ENCODE measurements at regions of chr4 and their contacts with region 1.

Region 1: DNA sequence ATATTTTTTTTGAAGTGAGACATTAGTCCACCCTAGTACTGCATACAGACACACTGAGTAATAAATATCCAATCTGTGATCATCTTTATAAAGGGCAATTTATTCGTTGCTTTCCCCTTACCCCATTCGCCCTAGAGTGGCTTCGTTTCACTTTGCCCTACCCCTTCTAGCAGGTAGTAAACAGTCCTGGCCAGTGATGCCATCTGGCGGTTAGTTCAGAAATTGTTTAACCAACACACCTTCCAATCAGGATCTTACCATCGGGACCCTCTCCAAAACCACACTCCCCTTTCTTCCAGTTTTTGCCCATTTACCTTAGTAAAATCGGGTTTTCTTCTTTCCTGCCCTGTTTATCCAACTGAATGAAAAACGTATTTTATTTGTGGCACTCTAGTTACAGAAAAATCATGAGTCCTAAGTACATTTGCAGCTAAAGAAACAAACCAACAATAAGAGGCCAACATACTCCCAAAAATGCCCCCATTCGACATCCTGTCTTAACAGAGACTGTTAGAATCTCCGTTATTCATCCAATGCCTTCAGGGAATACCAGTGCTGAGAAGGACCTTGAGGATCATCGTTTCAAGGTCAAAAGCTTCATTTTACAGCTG is 2.2 kb downstream of the PPA2 start:
- DNase-seq: peak; percentile 82
- ATAC-seq: peak; percentile 32
- H3K4me3 Mint-ChIP-seq: peak overlapping the region; percentile 99
- H3K27ac Mint-ChIP-seq: peak overlapping the region; percentile 70
- H3K4me1 Mint-ChIP-seq: peaks cover 49% of the 10 kb centered on the region
- H3K27me3 Mint-ChIP-seq: peaks cover 1% of the 10 kb centered on the region
- CTCF ChIP-seq: peak; percentile 75

Region 2: GRCh38 chr4:104930298-104930697 is 541.4 kb before region 1 on chr4:
- CTCF ChIA-PET with region 1: no interaction called
- POLR2A ChIA-PET with region 1: interaction called, 3 read pairs
- intact Hi-C with region 1: loop called (anchors 10 kb)
- DNase-seq: no peak
- ATAC-seq: no peak
- H3K4me3 Mint-ChIP-seq: no peak overlapping the region
- H3K27ac Mint-ChIP-seq: no peak overlapping the region
- H3K4me1 Mint-ChIP-seq: peaks cover 40% of the 10 kb centered on the region
- H3K27me3 Mint-ChIP-seq: no peaks in the 10 kb centered on the region
- CTCF ChIP-seq: no peak

Region 3: GRCh38 chr4:105061136-105061696 is 410.5 kb before region 1 on chr4:
- CTCF ChIA-PET with region 1: interaction called, 4 read pairs
- POLR2A ChIA-PET with region 1: interaction called, 4 read pairs
- intact Hi-C with region 1: loop called (anchors 5 kb)
- DNase-seq: peak; percentile 70
- ATAC-seq: peak; percentile 60
- H3K4me3 Mint-ChIP-seq: peak overlapping the region; percentile 51
- H3K27ac Mint-ChIP-seq: peak overlapping the region; percentile 89
- H3K4me1 Mint-ChIP-seq: peaks cover 52% of the 10 kb centered on the region
- H3K27me3 Mint-ChIP-seq: no peaks in the 10 kb centered on the region
- CTCF ChIP-seq: no peak

Region 4: DNA sequence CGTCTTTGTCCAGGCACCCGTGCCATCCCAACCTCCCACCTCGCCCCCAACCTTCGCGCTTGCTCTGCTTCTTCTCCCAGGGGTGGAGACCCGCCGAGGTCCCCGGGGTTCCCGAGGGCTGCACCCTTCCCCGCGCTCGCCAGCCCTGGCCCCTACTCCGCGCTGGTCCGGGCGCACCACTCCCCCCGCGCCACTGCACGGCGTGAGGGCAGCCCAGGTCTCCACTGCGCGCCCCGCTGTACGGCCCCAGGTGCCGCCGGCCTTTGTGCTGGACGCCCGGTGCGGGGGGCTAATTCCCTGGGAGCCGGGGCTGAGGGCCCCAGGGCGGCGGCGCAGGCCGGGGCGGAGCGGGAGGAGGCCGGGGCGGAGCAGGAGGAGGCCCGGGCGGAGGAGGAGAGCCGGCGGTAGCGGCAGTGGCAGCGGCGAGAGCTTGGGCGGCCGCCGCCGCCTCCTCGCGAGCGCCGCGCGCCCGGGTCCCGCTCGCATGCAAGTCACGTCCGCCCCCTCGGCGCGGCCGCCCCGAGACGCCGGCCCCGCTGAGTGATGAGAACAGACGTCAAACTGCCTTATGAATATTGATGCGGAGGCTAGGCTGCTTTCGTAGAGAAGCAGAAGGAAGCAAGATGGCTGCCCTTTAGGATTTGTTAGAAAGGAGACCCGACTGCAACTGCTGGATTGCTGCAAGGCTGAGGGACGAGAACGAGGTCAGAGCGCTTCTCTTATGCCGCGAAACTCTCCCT is 325.2 kb before region 1 on chr4 and contains the start of gene TET2:
- CTCF ChIA-PET with region 1: interaction called, 16 read pairs
- POLR2A ChIA-PET with region 1: interaction called, 18 read pairs
- intact Hi-C with region 1: loop called (anchors 1 kb)
- DNase-seq: peak; percentile 91
- ATAC-seq: peak; percentile 85
- H3K4me3 Mint-ChIP-seq: peak within 1 kb of the TSS; percentile 91
- H3K27ac Mint-ChIP-seq: peak within 1 kb of the TSS; percentile 100
- H3K4me1 Mint-ChIP-seq: peaks cover 36% of the 10 kb centered on the region
- H3K27me3 Mint-ChIP-seq: no peaks in the 10 kb centered on the region
- CTCF ChIP-seq: no peak
- total RNA-seq, gene TET2: 31.3 to 36.0 TPM

Region 5: GRCh38 chr4:105306158-105306781 is 165.4 kb before region 1 on chr4:
- CTCF ChIA-PET with region 1: interaction called, 9 read pairs
- POLR2A ChIA-PET with region 1: interaction called, 3 read pairs
- intact Hi-C with region 1: loop called (anchors 2 kb)
- DNase-seq: peak; percentile 86
- ATAC-seq: peak; percentile 83
- H3K4me3 Mint-ChIP-seq: no peak overlapping the region
- H3K27ac Mint-ChIP-seq: peak overlapping the region; percentile 92
- H3K4me1 Mint-ChIP-seq: peaks cover 25% of the 10 kb centered on the region
- H3K27me3 Mint-ChIP-seq: no peaks in the 10 kb centered on the region
- CTCF ChIP-seq: no peak

Region 6: DNA sequence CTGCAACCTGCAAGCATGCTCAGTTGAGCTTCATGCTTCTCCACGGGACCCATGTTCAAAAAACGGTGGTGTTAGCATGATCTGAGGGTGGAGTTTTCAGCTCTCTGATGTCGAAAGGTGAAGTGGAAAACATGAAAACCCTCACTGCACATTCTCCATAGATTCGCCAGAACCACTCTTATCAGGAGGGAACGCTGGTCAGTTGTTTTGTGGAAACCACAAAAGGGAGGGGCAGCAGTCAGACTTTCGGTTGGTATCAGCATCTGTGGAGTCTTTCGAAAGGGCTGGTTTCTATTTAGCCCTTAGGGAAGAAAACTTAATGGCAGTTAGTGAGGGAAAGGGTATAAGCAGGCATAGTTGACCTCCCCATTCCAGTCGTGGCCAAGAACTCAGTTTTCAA is 10.4 kb before region 1 on chr4:
- CTCF ChIA-PET with region 1: interaction called, 25 read pairs
- POLR2A ChIA-PET with region 1: interaction called, 3 read pairs
- intact Hi-C with region 1: no loop called
- DNase-seq: no peak
- ATAC-seq: no peak
- H3K4me3 Mint-ChIP-seq: no peak overlapping the region
- H3K27ac Mint-ChIP-seq: no peak overlapping the region
- H3K4me1 Mint-ChIP-seq: peaks cover 32% of the 10 kb centered on the region
- H3K27me3 Mint-ChIP-seq: no peaks in the 10 kb centered on the region
- CTCF ChIP-seq: no peak

Region 7: GRCh38 chr4:105670684-105671083 is 199.0 kb after region 1 on chr4:
- CTCF ChIA-PET with region 1: no interaction called
- POLR2A ChIA-PET with region 1: no interaction called
- intact Hi-C with region 1: no loop called
- DNase-seq: no peak
- ATAC-seq: no peak
- H3K4me3 Mint-ChIP-seq: no peak overlapping the region
- H3K27ac Mint-ChIP-seq: no peak overlapping the region
- H3K4me1 Mint-ChIP-seq: no peaks in the 10 kb centered on the region
- H3K27me3 Mint-ChIP-seq: peaks cover 19% of the 10 kb centered on the region
- CTCF ChIP-seq: no peak

Region 8: DNA sequence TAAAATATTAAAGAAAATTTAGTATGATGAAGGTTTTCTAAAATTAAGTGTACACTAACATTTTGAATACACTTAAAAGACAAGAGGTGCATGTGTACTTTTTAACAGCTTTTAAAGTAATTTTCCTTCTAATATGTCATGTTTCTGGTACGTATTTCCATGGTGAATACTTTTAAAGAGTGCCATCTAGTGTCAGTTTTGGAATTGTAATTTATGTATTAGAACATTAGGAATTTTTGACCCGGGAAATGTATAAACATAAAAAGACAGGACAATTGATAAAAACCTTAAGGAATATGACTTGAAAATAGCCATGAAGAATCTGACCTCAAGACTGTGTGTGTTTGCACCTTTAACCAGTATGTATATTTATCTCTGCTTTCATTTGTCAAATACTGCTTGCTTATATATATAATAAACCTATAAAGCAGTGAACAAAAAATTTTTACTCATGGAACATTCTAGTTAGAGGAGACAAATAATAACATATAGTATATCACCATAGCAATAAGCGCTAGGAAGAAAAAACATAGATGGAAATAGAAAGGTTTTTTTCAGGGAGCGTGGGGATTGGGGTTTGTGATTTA is 244.1 kb after region 1 on chr4:
- CTCF ChIA-PET with region 1: interaction called, 12 read pairs
- POLR2A ChIA-PET with region 1: no interaction called
- intact Hi-C with region 1: no loop called
- DNase-seq: no peak
- ATAC-seq: no peak
- H3K4me3 Mint-ChIP-seq: no peak overlapping the region
- H3K27ac Mint-ChIP-seq: no peak overlapping the region
- H3K4me1 Mint-ChIP-seq: no peaks in the 10 kb centered on the region
- H3K27me3 Mint-ChIP-seq: no peaks in the 10 kb centered on the region
- CTCF ChIP-seq: peak; percentile 58

Measured in activated CD8-positive, alpha-beta T cell treated with anti-CD3 and anti-CD28 coated beads for 36 hours (primary cell).